Heart left ventricle (tissue), 16 donors: ENCODE measurements at regions of chr13 and their contacts with region 1.

Region 1: DNA sequence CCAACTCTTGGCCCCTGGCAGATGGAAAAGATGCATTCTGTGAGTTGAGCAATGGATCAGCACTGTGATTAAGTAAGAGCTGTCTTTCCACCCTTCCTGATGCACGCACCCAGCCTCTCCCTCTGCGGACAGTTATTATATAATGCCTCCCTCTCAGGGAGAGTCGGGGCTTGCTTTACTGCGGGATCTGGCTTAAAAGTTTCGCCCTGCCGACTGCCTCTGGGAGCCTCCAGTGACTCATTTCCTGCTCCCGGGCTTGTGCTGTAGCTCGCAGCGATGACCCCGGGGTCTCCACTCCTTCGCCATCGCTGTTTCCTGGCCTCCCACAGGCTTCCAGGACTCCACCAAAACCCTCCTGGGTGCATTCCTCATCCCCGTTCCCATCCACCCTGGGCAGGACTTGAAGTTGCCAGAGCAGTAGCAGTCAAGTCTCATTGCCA is 107.4 kb upstream of the SLC7A1 start:
- DNase-seq: peak; percentile 37 to 66 (median 47)
- ATAC-seq: peak in 3 of 4 donors; percentile 44 to 73 (median 56)
- H3K4me3 ChIP-seq: peak overlapping the region in 2 of 12 donors; percentile 27 to 31
- H3K27ac ChIP-seq: no peak overlapping the region
- H3K4me1 ChIP-seq: peaks cover 0 to 23% (median 11%) of the 10 kb centered on the region in 12 donors
- H3K27me3 ChIP-seq: no peaks in the 10 kb centered on the region
- CTCF ChIP-seq: no peak
- POLR2A ChIP-seq: no peak

Region 2: DNA sequence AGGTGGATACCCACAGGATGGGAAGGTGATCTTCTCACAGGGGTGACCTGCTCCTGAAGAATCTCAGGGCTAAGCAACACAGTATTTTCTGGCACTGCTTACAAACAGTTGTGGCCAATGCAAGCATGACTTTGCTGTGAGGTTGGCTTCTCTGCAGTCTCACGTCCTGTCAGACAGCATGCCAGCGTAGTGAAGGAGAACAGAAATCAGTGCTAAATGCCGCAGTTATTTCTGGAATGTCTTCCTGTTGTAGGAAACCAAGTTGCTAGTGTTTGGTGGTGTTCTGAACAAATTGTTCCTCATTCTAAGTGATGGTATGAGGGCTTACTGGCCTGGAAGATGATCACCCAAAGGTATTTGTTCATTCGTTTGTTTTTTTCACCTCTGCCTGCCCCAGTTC is 562.7 kb before region 1 on chr13:
- intact Hi-C with region 1: no loop called
- DNase-seq: peak in 4 of 5 donors; percentile 16 to 46 (median 29)
- ATAC-seq: peak; percentile 92 to 96 (median 94)
- H3K4me3 ChIP-seq: peak overlapping the region in 9 of 12 donors; percentile 12 to 50 (median 34)
- H3K27ac ChIP-seq: peak overlapping the region in 8 of 12 donors; percentile 6 to 58 (median 28)
- H3K4me1 ChIP-seq: peaks cover 0 to 8% (median 0%) of the 10 kb centered on the region in 12 donors
- H3K27me3 ChIP-seq: no peaks in the 10 kb centered on the region
- CTCF ChIP-seq: no peak
- POLR2A ChIP-seq: no peak

Region 3: GRCh38 chr13:29573190-29573589 is 129.7 kb before region 1 on chr13:
- intact Hi-C with region 1: loop called in 1 of 10 experiments (anchors 5 kb)
- DNase-seq: peak in 3 of 5 donors; percentile 27 to 46 (median 37)
- ATAC-seq: peak in 3 of 4 donors; percentile 34 to 67 (median 66)
- H3K4me3 ChIP-seq: no peak overlapping the region
- H3K27ac ChIP-seq: no peak overlapping the region
- H3K4me1 ChIP-seq: peaks cover 0 to 30% (median 13%) of the 10 kb centered on the region in 12 donors
- H3K27me3 ChIP-seq: no peaks in the 10 kb centered on the region
- CTCF ChIP-seq: no peak
- POLR2A ChIP-seq: no peak